ENCODE measurements at regions of chr2 and their contacts with region 1.

Region 1: GRCh38 chr2:166671235-166671634 is 177.2 kb upstream of the SCN7A start:
- DNase-seq: peak; percentile 72
- ATAC-seq: peak; percentile 85
- H3K4me3 ChIP-seq: no peak overlapping the region
- H3K27ac ChIP-seq: no peak overlapping the region
- H3K4me1 ChIP-seq: peaks cover 12% of the 10 kb centered on the region
- H3K27me3 ChIP-seq: no peaks in the 10 kb centered on the region
- CTCF ChIP-seq: no peak

Region 2: GRCh38 chr2:166658901-166659300 is 12.3 kb before region 1 on chr2:
- CTCF ChIA-PET with region 1: interaction called, 3 read pairs
- POLR2A ChIA-PET with region 1: no interaction called
- intact Hi-C with region 1: loop called (anchors 1 kb)
- DNase-seq: peak; percentile 33
- ATAC-seq: peak; percentile 93
- H3K4me3 ChIP-seq: no peak overlapping the region
- H3K27ac ChIP-seq: no peak overlapping the region
- H3K4me1 ChIP-seq: peaks cover 9% of the 10 kb centered on the region; the same call in 1 of the 2 replicates
- H3K27me3 ChIP-seq: no peaks in the 10 kb centered on the region
- CTCF ChIP-seq: no peak

Region 3: GRCh38 chr2:166972418-166972817 is 301.2 kb after region 1 on chr2:
- CTCF ChIA-PET with region 1: no interaction called
- POLR2A ChIA-PET with region 1: no interaction called
- intact Hi-C with region 1: no loop called
- DNase-seq: peak; percentile 65
- ATAC-seq: peak; percentile 94
- H3K4me3 ChIP-seq: peak overlapping the region; percentile 11; the same call in 1 of the 2 replicates
- H3K27ac ChIP-seq: peak overlapping the region; percentile 74
- H3K4me1 ChIP-seq: peaks cover 18% of the 10 kb centered on the region
- H3K27me3 ChIP-seq: no peaks in the 10 kb centered on the region
- CTCF ChIP-seq: no peak